ENCODE measurements at regions of chr15 and their contacts with region 1.

Region 1: DNA sequence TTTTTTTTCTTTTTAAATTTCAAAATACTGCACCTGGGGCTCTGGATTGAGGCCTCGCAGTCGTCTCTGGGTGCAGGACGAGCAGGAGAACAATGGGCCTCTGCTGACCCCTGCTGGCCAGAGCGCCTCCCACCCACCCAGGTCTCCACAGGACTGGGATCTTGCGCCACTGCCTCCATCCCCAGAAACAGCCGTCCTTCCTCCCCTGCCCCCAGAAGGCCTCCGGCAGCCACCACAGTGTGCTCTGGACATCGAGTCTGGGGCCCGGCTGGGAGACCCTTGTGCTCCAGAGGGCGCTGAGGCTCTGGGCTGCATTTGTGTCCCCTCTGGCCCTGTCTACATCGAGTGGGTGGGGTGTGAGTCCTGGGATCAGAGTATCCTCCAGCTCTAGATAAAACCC is 6.6 kb upstream of the ACSBG1 start:
- DNase-seq: peak; percentile 66 to 97
- H3K4me3 ChIP-seq: no peak overlapping the region
- H3K27ac ChIP-seq: no peak overlapping the region
- H3K4me1 ChIP-seq: peaks cover 0 to 8% (median 5%) of the 10 kb centered on the region in 4 experiments; a peak in 6 of 7 replicates
- H3K27me3 ChIP-seq: no peaks in the 10 kb centered on the region
- CTCF ChIP-seq: peak; percentile 81 to 93 (median 86)
- EP300 ChIP-seq: no peak
- POLR2A ChIP-seq: no peak
- RAD21 ChIP-seq: peak; percentile 87 to 90

Region 2: DNA sequence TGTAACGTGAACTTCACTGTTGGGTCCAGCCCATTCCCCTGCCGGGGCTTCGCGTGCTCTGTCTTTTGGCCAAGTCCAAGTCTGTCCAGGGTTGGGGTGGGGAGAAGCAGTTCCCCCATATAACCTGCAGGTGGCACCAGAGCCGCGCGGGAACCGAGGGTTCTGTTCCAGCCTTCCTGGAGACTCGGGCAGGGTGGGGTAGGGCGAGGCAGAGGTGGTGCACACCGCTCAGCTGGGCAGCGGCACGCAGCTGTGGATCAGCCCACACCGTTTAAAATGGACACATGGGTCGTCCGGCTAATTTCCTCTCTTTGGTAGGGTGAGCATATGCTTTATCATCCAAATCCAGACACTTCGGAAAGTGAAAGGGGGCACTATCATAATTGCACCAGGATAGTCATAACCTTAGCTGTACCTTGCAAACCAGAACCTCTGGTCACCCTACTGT is 281.6 kb before region 1 on chr15:
- CTCF ChIA-PET with region 1: interaction called, 18 read pairs
- POLR2A ChIA-PET with region 1: no interaction called
- DNase-seq: peak; percentile 58 to 99
- H3K4me3 ChIP-seq: no peak overlapping the region
- H3K27ac ChIP-seq: no peak overlapping the region
- H3K4me1 ChIP-seq: peaks cover 0 to 5% (median 1%) of the 10 kb centered on the region in 4 experiments; a peak in 4 of 7 replicates
- H3K27me3 ChIP-seq: no peaks in the 10 kb centered on the region; a peak in 1 of 7 replicates
- CTCF ChIP-seq: peak; percentile 90 to 97 (median 97)
- EP300 ChIP-seq: no peak
- POLR2A ChIP-seq: no peak
- RAD21 ChIP-seq: peak; percentile 97 to 98

Region 3: DNA sequence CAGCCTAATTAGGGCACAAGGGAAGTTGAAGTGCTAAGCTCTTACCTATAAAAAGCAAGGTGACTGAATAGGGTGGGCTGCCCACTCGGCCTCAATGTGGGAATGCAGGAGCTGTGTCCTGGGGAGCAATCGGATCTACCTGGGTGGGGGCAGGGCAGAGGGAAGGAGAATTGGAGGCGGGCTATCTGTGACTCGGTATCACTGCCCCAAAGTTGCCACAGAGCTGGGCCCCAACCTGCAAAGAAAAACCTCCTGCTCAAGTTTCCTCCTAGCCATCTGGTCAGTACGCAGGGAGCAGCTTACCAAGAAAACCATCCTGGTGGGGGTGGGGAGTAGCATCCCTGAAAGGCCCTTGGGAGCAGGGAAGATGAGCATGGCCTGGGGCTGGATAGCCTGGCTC is 120.5 kb before region 1 on chr15:
- CTCF ChIA-PET with region 1: interaction called, 123 read pairs
- POLR2A ChIA-PET with region 1: interaction called, 3 read pairs
- DNase-seq: peak in 1 of 2 experiments; percentile 52
- H3K4me3 ChIP-seq: peak overlapping the region in 1 of 4 experiments; percentile 1; a peak in 3 of 8 replicates
- H3K27ac ChIP-seq: peak overlapping the region; percentile 32; the same call in 1 of the 2 replicates
- H3K4me1 ChIP-seq: peaks cover 0 to 11% (median 9%) of the 10 kb centered on the region in 4 experiments; a peak in 6 of 7 replicates
- H3K27me3 ChIP-seq: no peaks in the 10 kb centered on the region
- CTCF ChIP-seq: no peak
- EP300 ChIP-seq: no peak
- POLR2A ChIP-seq: no peak
- RAD21 ChIP-seq: no peak

Region 4: DNA sequence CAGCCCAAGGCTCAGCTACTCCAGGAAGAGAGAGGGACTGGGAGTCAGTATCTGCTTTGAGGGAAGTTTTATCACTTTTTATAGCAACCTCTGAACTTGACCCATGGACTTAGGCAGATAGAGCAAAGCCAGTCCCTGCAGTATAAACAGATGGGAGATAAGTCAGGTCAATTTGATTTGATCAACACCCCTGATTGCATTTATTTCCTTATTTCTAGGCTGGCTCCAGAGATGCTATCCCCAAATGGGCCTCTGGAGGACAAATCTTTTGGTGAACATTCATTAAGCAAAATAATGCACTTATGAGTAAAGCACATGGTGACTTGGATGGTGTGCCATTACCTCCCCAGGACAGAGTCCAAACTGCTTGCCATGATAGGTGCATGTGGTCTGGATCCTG is 100.7 kb before region 1 on chr15:
- CTCF ChIA-PET with region 1: interaction called, 16 read pairs
- POLR2A ChIA-PET with region 1: no interaction called
- DNase-seq: no peak
- H3K4me3 ChIP-seq: no peak overlapping the region
- H3K27ac ChIP-seq: no peak overlapping the region
- H3K4me1 ChIP-seq: no peaks in the 10 kb centered on the region
- H3K27me3 ChIP-seq: no peaks in the 10 kb centered on the region
- CTCF ChIP-seq: no peak
- EP300 ChIP-seq: no peak
- POLR2A ChIP-seq: no peak
- RAD21 ChIP-seq: no peak

Region 5: DNA sequence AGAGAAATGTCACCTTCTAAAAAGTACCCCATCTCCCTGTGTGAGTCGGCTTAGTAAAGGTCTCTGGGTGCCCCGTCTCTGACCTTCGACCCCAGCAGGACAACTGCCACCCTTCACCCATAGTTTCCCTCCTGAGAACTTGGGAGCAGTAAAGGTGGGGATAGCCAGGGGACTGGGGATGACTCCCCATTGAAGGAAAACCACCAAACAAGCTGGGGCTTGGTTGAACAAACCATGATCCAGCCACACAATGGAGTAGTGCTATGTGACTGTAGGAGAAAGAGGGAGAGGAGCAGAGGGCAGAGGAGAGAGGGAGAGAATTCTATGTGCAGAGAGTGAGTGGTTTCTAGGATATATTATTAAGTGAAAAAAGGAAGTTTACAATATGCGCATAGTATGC is 58.2 kb before region 1 on chr15:
- CTCF ChIA-PET with region 1: interaction called, 285 read pairs
- POLR2A ChIA-PET with region 1: no interaction called
- DNase-seq: no peak
- H3K4me3 ChIP-seq: no peak overlapping the region
- H3K27ac ChIP-seq: no peak overlapping the region
- H3K4me1 ChIP-seq: no peaks in the 10 kb centered on the region
- H3K27me3 ChIP-seq: no peaks in the 10 kb centered on the region
- CTCF ChIP-seq: no peak
- EP300 ChIP-seq: no peak
- POLR2A ChIP-seq: no peak
- RAD21 ChIP-seq: no peak

Region 6: DNA sequence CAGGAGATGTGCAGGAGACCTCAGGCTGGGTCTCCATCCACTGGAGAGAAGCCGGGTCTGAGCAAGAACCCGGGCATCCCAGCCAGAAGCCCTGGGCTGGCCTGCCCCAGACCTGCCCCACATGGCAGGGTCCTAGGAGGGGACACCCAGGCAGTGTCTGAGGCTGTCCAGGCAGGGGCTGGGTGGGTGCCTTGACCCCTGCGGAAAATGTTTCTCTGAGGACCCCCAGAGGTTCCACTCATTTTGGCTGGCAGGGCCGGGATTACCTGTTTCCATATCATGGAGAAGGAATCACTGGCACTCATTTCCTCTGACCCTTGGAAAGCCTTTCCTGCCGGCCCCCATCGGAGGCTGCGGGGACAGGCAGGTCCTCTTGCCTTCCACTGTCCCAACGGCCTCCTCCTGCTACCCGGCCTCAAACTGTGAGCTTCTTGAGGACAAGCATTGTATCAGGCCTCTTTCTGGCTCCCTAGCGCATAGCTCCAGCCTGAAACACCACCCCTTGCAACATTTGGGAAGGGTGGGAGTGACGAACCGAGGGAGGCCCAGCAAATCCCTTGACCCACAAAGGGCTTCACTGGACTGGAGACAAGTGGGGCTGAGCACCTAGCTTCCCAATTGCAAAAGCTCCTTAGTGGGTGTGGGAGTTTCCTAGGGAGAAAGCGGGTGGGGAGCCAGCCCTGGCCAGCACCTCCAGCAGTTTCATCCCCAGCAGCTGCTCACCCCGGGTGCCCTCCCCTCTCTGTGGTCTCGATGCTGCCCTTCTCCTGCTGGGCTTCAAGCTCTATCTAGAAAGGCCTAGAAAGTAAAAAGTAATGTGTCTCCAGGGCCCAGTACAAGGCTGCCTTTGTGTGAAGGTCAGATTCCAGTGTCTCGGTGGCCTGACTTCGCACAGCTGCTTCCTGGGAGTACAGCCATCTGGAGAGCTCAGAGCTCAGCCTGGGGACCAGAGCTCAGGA is 36.4 kb before region 1 on chr15:
- CTCF ChIA-PET with region 1: interaction called, 96 read pairs
- POLR2A ChIA-PET with region 1: interaction called, 3 read pairs
- DNase-seq: peak in 1 of 2 experiments; percentile 39
- H3K4me3 ChIP-seq: no peak overlapping the region
- H3K27ac ChIP-seq: no peak overlapping the region
- H3K4me1 ChIP-seq: no peaks in the 10 kb centered on the region; a peak in 1 of 7 replicates
- H3K27me3 ChIP-seq: no peaks in the 10 kb centered on the region
- CTCF ChIP-seq: no peak
- EP300 ChIP-seq: no peak
- POLR2A ChIP-seq: no peak
- RAD21 ChIP-seq: no peak

Region 7: GRCh38 chr15:78264304-78265136 is 23.5 kb after region 1 on chr15 and contains the start of gene DNAJA4:
- CTCF ChIA-PET with region 1: interaction called, 48 read pairs
- POLR2A ChIA-PET with region 1: interaction called, 5 read pairs
- DNase-seq: peak in 1 of 2 experiments; percentile 68
- H3K4me3 ChIP-seq: peak within 1 kb of the TSS; percentile 29 to 59 (median 32)
- H3K27ac ChIP-seq: no peak within 1 kb of the TSS
- H3K4me1 ChIP-seq: 0 out of 7 replicates have a peak, but pooled peaks cover 0 to 3% (median 0%) of the 10 kb centered on the region in 4 experiments
- H3K27me3 ChIP-seq: peaks cover 0 to 19% (median 10%) of the 10 kb centered on the region in 4 experiments; a peak in 4 of 7 replicates
- CTCF ChIP-seq: peak in 1 of 3 experiments; percentile 2; a peak in 1 of 4 replicates
- EP300 ChIP-seq: no peak
- POLR2A ChIP-seq: no peak
- RAD21 ChIP-seq: no peak
- total RNA-seq, gene DNAJA4: 2.5 and 3.6 TPM in 2 replicates